ENCODE measurements at regions of chr13 and their contacts with region 1.

Region 1: GRCh38 chr13:51452361-51453206 is at the start of gene INTS6:
- DNase-seq: peak; percentile 98 to 99
- H3K4me3 ChIP-seq: peak within 1 kb of the TSS; percentile 84 to 99 (median 92)
- H3K27ac ChIP-seq: peak within 1 kb of the TSS; percentile 83
- H3K4me1 ChIP-seq: no peaks in the 10 kb centered on the region; a peak in 1 of 7 replicates
- H3K27me3 ChIP-seq: no peaks in the 10 kb centered on the region
- CTCF ChIP-seq: no peak
- EP300 ChIP-seq: no peak
- POLR2A ChIP-seq: peak; percentile 100
- RAD21 ChIP-seq: peak; percentile 1 to 14; a peak in 1 of 4 replicates
- total RNA-seq, gene INTS6: 42.6 and 42.8 TPM in 2 replicates

Region 2: DNA sequence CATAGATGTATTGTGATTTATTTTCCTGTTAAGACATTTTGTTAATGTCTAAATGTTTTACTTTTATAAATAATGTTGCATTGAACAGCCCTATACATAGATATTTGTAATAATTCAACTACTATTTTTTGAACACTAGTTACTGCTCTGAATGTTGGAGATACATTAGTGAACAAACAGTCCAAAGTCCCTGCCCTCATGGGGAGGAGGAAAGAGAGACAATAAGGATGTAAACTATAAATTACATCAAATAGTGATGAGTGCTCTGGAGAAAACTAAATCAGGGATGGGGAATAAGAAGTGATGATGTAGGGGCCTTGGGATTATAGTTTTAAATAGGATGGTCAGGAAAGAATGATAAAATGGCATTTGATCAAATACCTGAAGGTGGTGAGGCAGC is 12.5 kb after region 1 on chr13:
- CTCF ChIA-PET with region 1: interaction called, 3 read pairs
- POLR2A ChIA-PET with region 1: interaction called, 22 read pairs
- DNase-seq: no peak
- H3K4me3 ChIP-seq: no peak overlapping the region
- H3K27ac ChIP-seq: no peak overlapping the region
- H3K4me1 ChIP-seq: no peaks in the 10 kb centered on the region
- H3K27me3 ChIP-seq: no peaks in the 10 kb centered on the region
- CTCF ChIP-seq: no peak
- EP300 ChIP-seq: no peak
- POLR2A ChIP-seq: no peak
- RAD21 ChIP-seq: no peak

Region 3: GRCh38 chr13:51583875-51584730 is 131.5 kb after region 1 on chr13 and contains the start of gene WDFY2:
- CTCF ChIA-PET with region 1: interaction called, 6 read pairs
- POLR2A ChIA-PET with region 1: interaction called, 30 read pairs
- DNase-seq: peak; percentile 100
- H3K4me3 ChIP-seq: peak within 1 kb of the TSS; percentile 76 to 94 (median 92)
- H3K27ac ChIP-seq: peak within 1 kb of the TSS; percentile 86
- H3K4me1 ChIP-seq: peaks cover 3 to 17% (median 9%) of the 10 kb centered on the region in 4 experiments; a peak in 6 of 7 replicates
- H3K27me3 ChIP-seq: no peaks in the 10 kb centered on the region
- CTCF ChIP-seq: no peak
- EP300 ChIP-seq: peak in 1 of 2 experiments; percentile 70; a peak in 1 of 3 replicates
- POLR2A ChIP-seq: peak; percentile 31 to 87
- RAD21 ChIP-seq: peak; percentile 6 to 11; a peak in 2 of 4 replicates
- total RNA-seq, gene WDFY2: 29.0 and 31.1 TPM in 2 replicates

Region 4: DNA sequence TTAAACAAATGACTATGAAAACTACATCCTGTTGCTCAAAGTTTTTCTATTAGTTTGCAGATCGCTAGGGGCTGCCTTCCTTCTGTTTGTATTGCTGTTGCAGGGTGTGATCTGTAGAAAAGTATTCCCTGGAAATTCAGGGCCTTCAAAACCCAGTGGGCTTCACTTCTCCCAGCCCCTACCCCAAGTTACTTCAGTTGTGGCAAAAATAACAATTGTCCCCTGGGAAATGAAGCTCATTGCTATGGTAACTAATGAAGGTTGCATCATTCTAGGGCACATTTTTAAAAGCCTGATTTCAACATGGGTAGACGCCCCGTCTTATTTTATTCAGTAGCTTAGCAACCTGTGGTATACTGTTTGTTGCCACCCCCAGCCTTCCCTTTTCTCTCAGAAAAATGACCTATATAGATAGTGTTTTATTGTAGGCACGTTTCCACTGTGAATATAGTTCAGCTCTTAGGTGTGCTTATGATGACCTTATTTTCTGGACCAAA is 192.6 kb after region 1 on chr13:
- CTCF ChIA-PET with region 1: interaction called, 3 read pairs
- POLR2A ChIA-PET with region 1: interaction called, 12 read pairs
- DNase-seq: no peak
- H3K4me3 ChIP-seq: peak overlapping the region in 1 of 4 experiments; percentile 17; a peak in 1 of 8 replicates
- H3K27ac ChIP-seq: peak overlapping the region; percentile 73; the same call in 1 of the 2 replicates
- H3K4me1 ChIP-seq: peaks cover 13 to 38% (median 23%) of the 10 kb centered on the region in 4 experiments
- H3K27me3 ChIP-seq: no peaks in the 10 kb centered on the region
- CTCF ChIP-seq: no peak
- EP300 ChIP-seq: no peak
- POLR2A ChIP-seq: no peak
- RAD21 ChIP-seq: no peak

Region 5: DNA sequence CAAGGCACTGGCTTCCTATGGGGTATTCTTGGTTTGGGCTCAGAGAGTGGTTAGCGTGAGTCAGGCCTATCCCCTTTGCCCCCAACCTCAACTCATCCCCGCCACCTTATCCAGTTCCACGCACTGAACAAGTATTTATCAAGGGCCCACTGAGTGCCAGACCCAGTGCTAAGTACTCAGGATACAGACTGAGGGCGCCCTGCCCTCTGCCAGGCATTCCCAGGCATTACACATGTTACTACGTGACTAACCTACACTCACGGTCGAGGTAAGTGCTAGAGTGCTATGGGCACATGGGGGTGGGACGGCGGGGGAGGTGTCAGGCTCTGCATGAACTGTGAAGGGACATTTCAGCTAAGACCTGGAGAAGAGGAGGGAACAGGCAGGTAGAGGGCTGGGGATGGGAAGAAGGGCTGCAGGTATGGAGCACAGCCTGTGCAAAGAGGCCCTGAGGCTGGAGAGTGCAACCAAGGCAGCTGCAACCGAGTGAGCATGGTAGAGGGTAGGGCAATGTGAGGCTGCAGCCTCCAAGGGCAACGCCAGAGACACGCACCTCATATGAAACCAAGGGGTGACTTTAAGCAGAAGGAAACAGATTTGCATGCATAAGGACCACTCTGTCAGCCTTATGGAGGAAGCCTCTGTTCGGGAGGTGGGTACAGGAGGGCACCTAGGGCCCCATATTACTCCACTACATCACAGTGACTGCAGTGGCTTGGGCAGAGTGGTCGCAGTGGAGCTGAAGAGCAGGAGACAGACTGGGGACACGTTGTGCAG is 328.9 kb after region 1 on chr13:
- CTCF ChIA-PET with region 1: interaction called, 4 read pairs
- POLR2A ChIA-PET with region 1: interaction called, 10 read pairs
- DNase-seq: no peak
- H3K4me3 ChIP-seq: no peak overlapping the region
- H3K27ac ChIP-seq: no peak overlapping the region
- H3K4me1 ChIP-seq: peaks cover 0 to 4% (median 0%) of the 10 kb centered on the region in 4 experiments; a peak in 2 of 7 replicates
- H3K27me3 ChIP-seq: no peaks in the 10 kb centered on the region; a peak in 1 of 7 replicates
- CTCF ChIP-seq: peak; percentile 38 to 69 (median 56); a peak in 3 of 4 replicates
- EP300 ChIP-seq: no peak
- POLR2A ChIP-seq: no peak
- RAD21 ChIP-seq: peak; percentile 76 to 77

Measured in H1 (cell line).